Calu3 (cell line): ENCODE measurements at regions of chr7 and their contacts with region 1.

Region 1: GRCh38 chr7:50793115-50793946 is 10.6 kb upstream of the GRB10 start:
- DNase-seq: peak; percentile 80
- H3K4me3 Mint-ChIP-seq: peak overlapping the region; percentile 91
- H3K27ac Mint-ChIP-seq: peak overlapping the region; percentile 7
- H3K4me1 Mint-ChIP-seq: peaks cover 32% of the 10 kb centered on the region
- H3K27me3 Mint-ChIP-seq: no peaks in the 10 kb centered on the region
- CTCF ChIP-seq: no peak

Region 2: DNA sequence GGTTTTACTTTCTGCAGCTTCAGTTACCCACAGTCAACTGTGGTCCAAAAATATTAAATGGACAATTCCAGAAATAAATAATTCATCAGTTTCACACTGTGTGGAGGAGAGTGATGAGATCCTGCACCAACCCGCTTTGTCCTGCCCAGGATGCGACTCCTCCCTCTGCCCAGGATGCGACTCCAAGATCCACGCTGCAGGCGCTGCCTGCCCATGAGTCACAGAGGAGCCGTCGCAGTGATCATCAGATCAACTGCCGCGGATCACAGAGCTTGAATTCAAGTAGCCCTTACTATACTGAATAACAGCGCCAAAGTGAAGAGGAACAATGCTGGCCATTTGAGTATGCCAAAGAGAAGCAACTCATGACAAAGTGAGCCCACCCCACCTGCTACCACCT is 72.2 kb before region 1 on chr7:
- CTCF ChIA-PET with region 1: no interaction called
- intact Hi-C with region 1: no loop called
- DNase-seq: no peak
- H3K4me3 Mint-ChIP-seq: no peak overlapping the region
- H3K27ac Mint-ChIP-seq: no peak overlapping the region
- H3K4me1 Mint-ChIP-seq: peaks cover 16% of the 10 kb centered on the region
- H3K27me3 Mint-ChIP-seq: no peaks in the 10 kb centered on the region
- CTCF ChIP-seq: no peak

Region 3: DNA sequence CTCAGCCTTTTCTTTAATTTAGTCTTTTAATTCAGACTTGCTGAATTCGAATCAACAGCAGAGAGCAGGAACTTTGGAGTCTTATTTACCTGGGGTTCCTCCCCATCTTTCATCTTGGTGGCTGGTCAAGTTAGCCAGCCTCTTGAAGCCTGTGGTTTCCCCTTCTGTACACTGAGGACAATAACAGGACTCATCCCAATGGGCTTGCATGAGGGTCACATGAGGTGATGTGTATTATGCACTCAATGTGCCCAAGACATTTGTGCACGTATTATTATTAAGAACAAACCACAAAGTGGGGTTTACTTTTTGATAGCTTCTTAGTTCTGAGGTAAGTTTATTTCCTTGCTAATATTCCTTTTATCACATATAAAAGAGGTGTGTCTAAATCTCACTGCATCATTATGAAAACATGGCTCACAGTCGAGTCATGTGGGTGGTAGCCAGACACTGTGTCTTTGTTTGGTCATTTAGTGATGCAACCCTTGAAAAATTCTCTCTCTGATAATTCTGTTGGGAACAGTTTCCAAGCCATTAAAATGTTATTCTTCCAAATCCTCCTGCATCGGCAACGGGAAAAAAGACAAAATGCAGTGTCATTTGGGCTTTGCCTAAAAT is 75.9 kb after region 1 on chr7:
- CTCF ChIA-PET with region 1: no interaction called
- intact Hi-C with region 1: loop called (anchors 2 kb)
- DNase-seq: peak; percentile 72
- H3K4me3 Mint-ChIP-seq: peak overlapping the region; percentile 51
- H3K27ac Mint-ChIP-seq: peak overlapping the region; percentile 99
- H3K4me1 Mint-ChIP-seq: peaks cover 58% of the 10 kb centered on the region
- H3K27me3 Mint-ChIP-seq: no peaks in the 10 kb centered on the region
- CTCF ChIP-seq: no peak

Region 4: DNA sequence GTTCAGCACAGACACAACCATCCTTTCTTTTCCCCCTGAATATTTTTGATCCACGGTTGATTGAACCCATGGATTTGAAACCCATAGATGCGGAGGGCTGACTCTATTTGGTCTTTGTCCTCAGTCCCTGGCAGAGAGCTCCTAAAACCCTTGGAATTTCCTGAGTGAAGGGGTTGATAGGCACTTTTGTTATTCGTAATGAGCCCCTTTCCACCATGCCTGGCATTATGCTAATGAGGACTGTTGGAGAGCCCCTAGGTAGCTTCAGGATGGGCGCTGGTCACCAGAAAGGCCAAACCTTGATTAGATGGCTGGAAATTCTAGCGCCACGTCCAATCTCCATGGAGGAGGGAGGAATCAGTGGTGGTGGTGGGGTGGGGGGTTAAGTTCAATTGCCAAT is 195.1 kb after region 1 on chr7:
- CTCF ChIA-PET with region 1: no interaction called
- intact Hi-C with region 1: loop called (anchors 5 kb)
- DNase-seq: no peak
- H3K4me3 Mint-ChIP-seq: no peak overlapping the region
- H3K27ac Mint-ChIP-seq: no peak overlapping the region
- H3K4me1 Mint-ChIP-seq: peaks cover 6% of the 10 kb centered on the region
- H3K27me3 Mint-ChIP-seq: no peaks in the 10 kb centered on the region
- CTCF ChIP-seq: no peak

Region 5: DNA sequence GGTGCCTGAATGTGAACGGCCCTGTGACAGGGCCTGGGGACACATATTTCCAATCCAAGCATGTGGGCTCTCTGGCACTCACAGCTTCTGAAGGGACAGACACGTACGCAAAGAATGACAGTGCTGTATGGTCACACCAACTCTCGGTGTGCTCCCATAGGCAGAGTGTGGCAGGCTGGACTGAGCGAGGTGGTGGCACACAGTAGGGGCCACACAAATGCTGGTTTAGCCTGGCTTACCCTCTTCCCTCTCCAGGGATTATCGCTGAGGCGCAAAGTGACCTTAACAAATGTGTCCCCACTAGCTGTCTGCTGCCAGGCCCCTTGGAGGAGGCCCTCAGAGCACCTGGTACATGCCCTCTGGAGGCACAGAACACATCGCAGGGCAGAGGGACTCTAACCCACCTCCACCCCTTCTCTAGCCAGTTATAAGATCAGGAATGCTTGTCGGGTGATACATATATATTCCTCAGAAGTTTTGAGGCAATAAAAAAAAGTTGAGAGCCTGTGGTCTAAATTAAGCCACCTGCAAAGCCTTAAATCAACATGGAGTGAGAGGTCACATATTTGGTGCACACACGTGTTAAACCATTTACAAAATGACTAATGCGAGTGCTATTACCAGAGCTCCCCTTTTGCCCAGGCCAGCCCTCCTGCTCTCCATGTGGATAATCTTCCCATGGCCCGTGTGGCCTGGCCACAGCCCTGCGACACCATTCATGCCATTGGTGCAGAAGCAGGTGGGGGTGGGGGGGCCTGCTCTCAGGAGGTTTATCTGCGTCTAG is 252.2 kb after region 1 on chr7:
- CTCF ChIA-PET with region 1: no interaction called
- intact Hi-C with region 1: loop called (anchors 5 kb)
- DNase-seq: peak; percentile 82
- H3K4me3 Mint-ChIP-seq: peak overlapping the region; percentile 43
- H3K27ac Mint-ChIP-seq: peak overlapping the region; percentile 48
- H3K4me1 Mint-ChIP-seq: peaks cover 36% of the 10 kb centered on the region
- H3K27me3 Mint-ChIP-seq: no peaks in the 10 kb centered on the region
- CTCF ChIP-seq: no peak